ENCODE measurements at regions of chr19 and their contacts with region 1.

Region 1: GRCh38 chr19:35204799-35205732 is 23.5 kb downstream of the FAM187B start:
- DNase-seq: peak in 4 of 14 experiments; percentile 38 to 60 (median 58)
- ATAC-seq: no peak
- H3K4me3 ChIP-seq: no peak overlapping the region
- H3K4me3 Mint-ChIP-seq: peak overlapping the region; percentile 6
- H3K27ac ChIP-seq: peak overlapping the region; percentile 84 to 98
- H3K27ac Mint-ChIP-seq: peak overlapping the region; percentile 98
- H3K4me1 ChIP-seq: peaks cover 78% of the 10 kb centered on the region
- H3K4me1 Mint-ChIP-seq: peaks cover 81% of the 10 kb centered on the region
- H3K27me3 ChIP-seq: no peaks in the 10 kb centered on the region
- H3K27me3 Mint-ChIP-seq: no peaks in the 10 kb centered on the region
- CTCF ChIP-seq: no peak

Region 2: GRCh38 chr19:34999498-35000341 is 205.3 kb before region 1 on chr19 and contains the start of gene GRAMD1A:
- CTCF ChIA-PET with region 1: no interaction called
- POLR2A ChIA-PET with region 1: no interaction called
- intact Hi-C with region 1: loop called (anchors 5 kb)
- DNase-seq: peak; percentile 50 to 85 (median 74)
- ATAC-seq: peak; percentile 28
- H3K4me3 ChIP-seq: peak within 1 kb of the TSS; percentile 59
- H3K4me3 Mint-ChIP-seq: peak within 1 kb of the TSS; percentile 99
- H3K27ac ChIP-seq: peak within 1 kb of the TSS; percentile 79 to 92
- H3K27ac Mint-ChIP-seq: peak within 1 kb of the TSS; percentile 98
- H3K4me1 ChIP-seq: peaks cover 89% of the 10 kb centered on the region
- H3K4me1 Mint-ChIP-seq: peaks cover 72% of the 10 kb centered on the region
- H3K27me3 ChIP-seq: no peaks in the 10 kb centered on the region
- H3K27me3 Mint-ChIP-seq: no peaks in the 10 kb centered on the region
- CTCF ChIP-seq: no peak
- total RNA-seq, gene GRAMD1A: 221 to 229 TPM

Region 3: GRCh38 chr19:35154525-35155406 is 50.3 kb before region 1 on chr19 and contains the start of gene FXYD5:
- CTCF ChIA-PET with region 1: interaction called, 6 read pairs
- POLR2A ChIA-PET with region 1: interaction called, 12 read pairs
- intact Hi-C with region 1: loop called (anchors 2 to 5 kb)
- DNase-seq: peak; percentile 49 to 82 (median 71)
- ATAC-seq: peak; percentile 75
- H3K4me3 ChIP-seq: peak within 1 kb of the TSS; percentile 99
- H3K4me3 Mint-ChIP-seq: peak within 1 kb of the TSS; percentile 98
- H3K27ac ChIP-seq: peak within 1 kb of the TSS; percentile 80 to 89
- H3K27ac Mint-ChIP-seq: peak within 1 kb of the TSS; percentile 98
- H3K4me1 ChIP-seq: peaks cover 55% of the 10 kb centered on the region
- H3K4me1 Mint-ChIP-seq: peaks cover 71% of the 10 kb centered on the region
- H3K27me3 ChIP-seq: no peaks in the 10 kb centered on the region
- H3K27me3 Mint-ChIP-seq: no peaks in the 10 kb centered on the region
- CTCF ChIP-seq: no peak
- total RNA-seq, gene FXYD5: 587 to 615 TPM

Region 4: GRCh38 chr19:35168207-35168606 is 36.9 kb before region 1 on chr19:
- CTCF ChIA-PET with region 1: interaction called, 3 read pairs
- POLR2A ChIA-PET with region 1: interaction called, 19 read pairs
- intact Hi-C with region 1: no loop called
- DNase-seq: no peak
- ATAC-seq: no peak
- H3K4me3 ChIP-seq: no peak overlapping the region
- H3K4me3 Mint-ChIP-seq: no peak overlapping the region
- H3K27ac ChIP-seq: peak overlapping the region; percentile 50 to 68
- H3K27ac Mint-ChIP-seq: peak overlapping the region; percentile 91
- H3K4me1 ChIP-seq: peaks cover 69% of the 10 kb centered on the region
- H3K4me1 Mint-ChIP-seq: peaks cover 68% of the 10 kb centered on the region
- H3K27me3 ChIP-seq: no peaks in the 10 kb centered on the region
- H3K27me3 Mint-ChIP-seq: no peaks in the 10 kb centered on the region
- CTCF ChIP-seq: no peak

Region 5: GRCh38 chr19:35184884-35185283 is 20.2 kb before region 1 on chr19:
- CTCF ChIA-PET with region 1: interaction called, 4 read pairs
- POLR2A ChIA-PET with region 1: interaction called, 10 read pairs
- intact Hi-C with region 1: loop called in 1 of 2 experiments (anchors 2 kb)
- DNase-seq: no peak
- ATAC-seq: no peak
- H3K4me3 ChIP-seq: no peak overlapping the region
- H3K4me3 Mint-ChIP-seq: no peak overlapping the region
- H3K27ac ChIP-seq: no peak overlapping the region
- H3K27ac Mint-ChIP-seq: no peak overlapping the region
- H3K4me1 ChIP-seq: peaks cover 7% of the 10 kb centered on the region
- H3K4me1 Mint-ChIP-seq: peaks cover 24% of the 10 kb centered on the region
- H3K27me3 ChIP-seq: no peaks in the 10 kb centered on the region
- H3K27me3 Mint-ChIP-seq: no peaks in the 10 kb centered on the region
- CTCF ChIP-seq: no peak

Region 6: GRCh38 chr19:35236638-35237400 is 31.8 kb after region 1 on chr19:
- CTCF ChIA-PET with region 1: no interaction called
- POLR2A ChIA-PET with region 1: interaction called, 17 read pairs
- intact Hi-C with region 1: loop called in 1 of 2 experiments (anchors 1 kb)
- DNase-seq: peak in 9 of 14 experiments; percentile 23 to 66 (median 48)
- ATAC-seq: no peak
- H3K4me3 ChIP-seq: no peak overlapping the region
- H3K4me3 Mint-ChIP-seq: no peak overlapping the region
- H3K27ac ChIP-seq: no peak overlapping the region
- H3K27ac Mint-ChIP-seq: no peak overlapping the region
- H3K4me1 ChIP-seq: peaks cover 17% of the 10 kb centered on the region
- H3K4me1 Mint-ChIP-seq: peaks cover 33% of the 10 kb centered on the region
- H3K27me3 ChIP-seq: no peaks in the 10 kb centered on the region
- H3K27me3 Mint-ChIP-seq: no peaks in the 10 kb centered on the region
- CTCF ChIP-seq: peak; percentile 48

Region 7: DNA sequence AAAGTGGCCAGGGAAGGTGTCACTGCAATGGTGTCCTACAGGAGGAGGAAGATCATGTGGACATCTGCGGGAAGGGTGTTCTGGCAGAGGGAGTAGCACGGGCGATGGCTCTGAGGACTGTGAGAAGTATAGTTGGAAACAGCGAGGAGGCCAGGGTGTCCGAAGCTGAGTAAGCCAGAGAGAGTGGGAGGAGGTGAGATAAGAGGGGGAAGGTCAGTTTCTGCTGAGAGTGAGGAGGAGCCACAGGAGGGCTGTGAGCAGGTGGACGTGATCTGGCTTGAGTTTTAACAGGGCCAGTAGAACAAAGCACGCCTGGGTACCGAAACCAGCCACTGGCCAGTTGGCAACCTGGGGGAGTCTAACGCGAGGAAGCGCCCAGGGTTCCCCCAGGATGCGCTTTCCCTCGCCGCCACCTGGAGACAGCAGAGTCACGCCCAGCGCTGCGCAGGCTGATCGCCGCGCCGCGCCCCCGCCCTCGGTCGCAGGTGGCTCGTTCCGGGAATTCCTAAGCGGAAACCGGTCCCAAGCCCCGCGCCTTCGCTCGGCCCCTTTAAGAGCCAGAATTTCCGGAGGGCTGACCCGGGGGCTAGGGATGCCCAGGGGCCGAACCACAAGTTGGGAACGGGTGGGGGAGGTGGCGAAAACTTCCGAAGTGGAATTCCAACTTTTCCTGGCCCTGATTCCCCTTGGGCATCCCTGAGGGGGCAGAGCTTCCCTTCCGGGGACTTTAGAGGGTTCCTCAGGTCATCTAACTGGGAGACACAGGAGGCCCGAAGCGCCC is 42.6 kb after region 1 on chr19:
- CTCF ChIA-PET with region 1: no interaction called
- POLR2A ChIA-PET with region 1: interaction called, 3 read pairs
- intact Hi-C with region 1: loop called in 1 of 2 experiments (anchors 5 kb)
- DNase-seq: peak in 12 of 14 experiments; percentile 51 to 81 (median 63)
- ATAC-seq: peak; percentile 50
- H3K4me3 ChIP-seq: peak overlapping the region; percentile 86
- H3K4me3 Mint-ChIP-seq: peak overlapping the region; percentile 92
- H3K27ac ChIP-seq: peak overlapping the region; percentile 59 to 73
- H3K27ac Mint-ChIP-seq: peak overlapping the region; percentile 85
- H3K4me1 ChIP-seq: peaks cover 31% of the 10 kb centered on the region
- H3K4me1 Mint-ChIP-seq: peaks cover 32% of the 10 kb centered on the region
- H3K27me3 ChIP-seq: peaks cover 0 to 6% of the 10 kb centered on the region in 2 experiments
- H3K27me3 Mint-ChIP-seq: peaks cover 39% of the 10 kb centered on the region
- CTCF ChIP-seq: peak; percentile 64

Measured in CD4-positive, alpha-beta T cell (primary cell).